CD8-positive, alpha-beta T cell (primary cell): ENCODE measurements at regions of chr11 and their contacts with region 1.

Region 1: GRCh38 chr11:17384002-17384511 is 4.4 kb downstream of the KCNJ11 start:
- DNase-seq: peak; percentile 51 to 87 (median 79)
- ATAC-seq: peak; percentile 68
- H3K4me3 ChIP-seq: no peak overlapping the region
- H3K4me3 Mint-ChIP-seq: no peak overlapping the region
- H3K27ac ChIP-seq: no peak overlapping the region
- H3K27ac Mint-ChIP-seq: no peak overlapping the region
- H3K4me1 ChIP-seq: no peaks in the 10 kb centered on the region
- H3K4me1 Mint-ChIP-seq: no peaks in the 10 kb centered on the region
- H3K27me3 ChIP-seq: peaks cover 0 to 2% of the 10 kb centered on the region in 2 experiments
- H3K27me3 Mint-ChIP-seq: no peaks in the 10 kb centered on the region
- CTCF ChIP-seq: peak; percentile 86

Region 2: DNA sequence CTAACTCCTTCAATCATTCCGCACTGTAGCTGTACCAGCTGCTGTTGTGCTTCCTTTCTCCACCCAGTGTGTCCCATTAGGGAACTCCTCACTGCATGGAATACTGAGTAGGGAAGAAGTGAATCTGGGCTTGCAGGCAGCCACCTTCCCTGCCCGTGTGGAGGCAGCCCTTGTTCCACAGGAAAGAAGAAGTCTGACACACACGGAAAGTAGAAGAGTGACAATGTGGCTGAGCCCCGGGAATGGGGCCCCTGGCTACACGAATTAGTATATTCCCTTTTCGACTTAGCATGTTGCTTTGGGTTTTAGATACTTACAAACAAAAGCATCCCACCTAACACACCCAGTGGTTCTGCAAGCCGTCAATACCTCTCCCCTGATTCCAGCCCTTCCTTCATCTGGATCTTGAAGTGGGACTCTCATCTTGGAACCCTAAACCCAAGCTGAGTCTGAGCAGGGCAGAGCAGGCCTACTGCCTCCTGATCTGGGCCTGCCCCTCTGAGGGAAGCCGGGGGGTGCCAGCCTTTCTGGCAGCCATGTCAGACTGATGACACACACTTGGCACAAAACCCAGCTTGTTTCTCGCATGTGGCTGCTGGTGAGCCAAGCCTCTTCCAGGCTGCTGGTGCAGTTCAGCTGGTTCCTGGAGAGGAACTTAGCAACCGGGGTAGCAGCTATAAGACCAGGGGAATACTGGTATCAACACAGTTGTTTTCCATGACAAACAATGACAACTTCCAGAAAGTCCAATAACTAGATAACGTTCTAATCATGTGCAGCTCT is 574.0 kb before region 1 on chr11:
- CTCF ChIA-PET with region 1: no interaction called
- POLR2A ChIA-PET with region 1: no interaction called
- intact Hi-C with region 1: loop called (anchors 5 to 10 kb)
- DNase-seq: no peak
- ATAC-seq: no peak
- H3K4me3 ChIP-seq: no peak overlapping the region
- H3K4me3 Mint-ChIP-seq: no peak overlapping the region
- H3K27ac ChIP-seq: no peak overlapping the region
- H3K27ac Mint-ChIP-seq: no peak overlapping the region
- H3K4me1 ChIP-seq: no peaks in the 10 kb centered on the region
- H3K4me1 Mint-ChIP-seq: peaks cover 2% of the 10 kb centered on the region
- H3K27me3 ChIP-seq: no peaks in the 10 kb centered on the region
- H3K27me3 Mint-ChIP-seq: no peaks in the 10 kb centered on the region
- CTCF ChIP-seq: no peak

Region 3: DNA sequence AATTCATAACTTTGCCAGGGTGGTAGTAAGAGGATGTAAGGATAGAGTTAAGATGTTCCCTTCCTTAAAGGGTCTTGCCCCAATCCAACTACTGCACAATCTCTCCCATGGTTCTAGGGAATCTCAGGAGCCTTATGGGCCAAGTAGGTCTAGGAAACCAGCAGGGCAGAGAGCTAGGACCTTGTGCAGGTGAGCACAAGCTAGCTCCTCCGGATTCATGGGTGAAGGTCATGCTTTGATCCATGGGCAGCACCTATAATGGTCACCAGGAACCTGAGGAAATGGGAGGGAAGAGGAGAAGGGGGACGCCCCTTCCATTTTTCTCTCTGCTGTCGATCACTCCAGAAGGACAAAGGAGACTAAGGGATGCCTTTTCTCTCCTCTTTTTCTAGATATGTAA is 12.4 kb before region 1 on chr11:
- CTCF ChIA-PET with region 1: interaction called, 21 read pairs
- POLR2A ChIA-PET with region 1: no interaction called
- intact Hi-C with region 1: no loop called
- DNase-seq: no peak
- ATAC-seq: no peak
- H3K4me3 ChIP-seq: no peak overlapping the region
- H3K4me3 Mint-ChIP-seq: no peak overlapping the region
- H3K27ac ChIP-seq: no peak overlapping the region
- H3K27ac Mint-ChIP-seq: no peak overlapping the region
- H3K4me1 ChIP-seq: no peaks in the 10 kb centered on the region
- H3K4me1 Mint-ChIP-seq: no peaks in the 10 kb centered on the region
- H3K27me3 ChIP-seq: no peaks in the 10 kb centered on the region
- H3K27me3 Mint-ChIP-seq: no peaks in the 10 kb centered on the region
- CTCF ChIP-seq: no peak

Region 4: GRCh38 chr11:17504330-17505107 is 120.5 kb after region 1 on chr11:
- CTCF ChIA-PET with region 1: interaction called, 119 read pairs
- POLR2A ChIA-PET with region 1: no interaction called
- intact Hi-C with region 1: loop called (anchors 1 kb)
- DNase-seq: peak; percentile 59 to 85 (median 75)
- ATAC-seq: peak; percentile 85
- H3K4me3 ChIP-seq: no peak overlapping the region
- H3K4me3 Mint-ChIP-seq: no peak overlapping the region
- H3K27ac ChIP-seq: no peak overlapping the region
- H3K27ac Mint-ChIP-seq: no peak overlapping the region
- H3K4me1 ChIP-seq: no peaks in the 10 kb centered on the region
- H3K4me1 Mint-ChIP-seq: no peaks in the 10 kb centered on the region
- H3K27me3 ChIP-seq: no peaks in the 10 kb centered on the region
- H3K27me3 Mint-ChIP-seq: peaks cover 6% of the 10 kb centered on the region
- CTCF ChIP-seq: peak; percentile 72

Region 5: GRCh38 chr11:17978553-17979287 is 594.7 kb after region 1 on chr11:
- CTCF ChIA-PET with region 1: no interaction called
- POLR2A ChIA-PET with region 1: no interaction called
- intact Hi-C with region 1: loop called in 1 of 2 experiments (anchors 10 kb)
- DNase-seq: peak in 2 of 9 experiments; percentile 7 to 8
- ATAC-seq: no peak
- H3K4me3 ChIP-seq: no peak overlapping the region
- H3K4me3 Mint-ChIP-seq: no peak overlapping the region
- H3K27ac ChIP-seq: no peak overlapping the region
- H3K27ac Mint-ChIP-seq: no peak overlapping the region
- H3K4me1 ChIP-seq: no peaks in the 10 kb centered on the region
- H3K4me1 Mint-ChIP-seq: peaks cover 3% of the 10 kb centered on the region
- H3K27me3 ChIP-seq: no peaks in the 10 kb centered on the region
- H3K27me3 Mint-ChIP-seq: no peaks in the 10 kb centered on the region
- CTCF ChIP-seq: no peak